Esophagus muscularis mucosa (tissue), 4 donors: ENCODE measurements at regions of chr15 and their contacts with region 1.

Region 1: GRCh38 chr15:79380755-79381497 is 51.2 kb upstream of the MINAR1 start:
- DNase-seq: no peak
- H3K4me3 ChIP-seq: no peak overlapping the region
- H3K27ac ChIP-seq: no peak overlapping the region
- H3K4me1 ChIP-seq: peaks cover 0 to 4% (median 0%) of the 10 kb centered on the region in 4 donors
- H3K27me3 ChIP-seq: no peaks in the 10 kb centered on the region
- CTCF ChIP-seq: peak; percentile 76 to 91 (median 89)
- EP300 ChIP-seq: no peak
- POLR2A ChIP-seq: no peak

Region 2: GRCh38 chr15:79310983-79311900 is 69.7 kb before region 1 on chr15 and contains the start of gene TMED3:
- intact Hi-C with region 1: no loop called
- DNase-seq: peak; percentile 37
- H3K4me3 ChIP-seq: peak within 1 kb of the TSS; percentile 71 to 91 (median 74)
- H3K27ac ChIP-seq: peak within 1 kb of the TSS in 3 of 4 donors; percentile 27 to 56 (median 39)
- H3K4me1 ChIP-seq: peaks cover 13 to 27% (median 21%) of the 10 kb centered on the region in 4 donors
- H3K27me3 ChIP-seq: no peaks in the 10 kb centered on the region
- CTCF ChIP-seq: no peak
- EP300 ChIP-seq: no peak
- POLR2A ChIP-seq: no peak
- total RNA-seq, gene TMED3: 17.9 to 26.5 (median 23.5) TPM

Region 3: GRCh38 chr15:79596051-79596507 is 215.2 kb after region 1 on chr15:
- intact Hi-C with region 1: loop called (anchors 5 kb)
- DNase-seq: peak; percentile 88
- H3K4me3 ChIP-seq: no peak overlapping the region
- H3K27ac ChIP-seq: no peak overlapping the region
- H3K4me1 ChIP-seq: no peaks in the 10 kb centered on the region
- H3K27me3 ChIP-seq: peaks cover 0 to 17% (median 0%) of the 10 kb centered on the region in 4 donors
- CTCF ChIP-seq: peak; percentile 60 to 70 (median 64)
- EP300 ChIP-seq: no peak
- POLR2A ChIP-seq: no peak

Region 4: GRCh38 chr15:79853458-79854328 is 472.8 kb after region 1 on chr15:
- intact Hi-C with region 1: loop called (anchors 2 kb)
- DNase-seq: no peak
- H3K4me3 ChIP-seq: no peak overlapping the region
- H3K27ac ChIP-seq: no peak overlapping the region
- H3K4me1 ChIP-seq: no peaks in the 10 kb centered on the region
- H3K27me3 ChIP-seq: no peaks in the 10 kb centered on the region
- CTCF ChIP-seq: peak; percentile 64 to 89 (median 84)
- EP300 ChIP-seq: no peak
- POLR2A ChIP-seq: no peak